Head of caudate nucleus (tissue), 42 donors: ENCODE measurements at regions of chr15 and their contacts with region 1.

Region 1: DNA sequence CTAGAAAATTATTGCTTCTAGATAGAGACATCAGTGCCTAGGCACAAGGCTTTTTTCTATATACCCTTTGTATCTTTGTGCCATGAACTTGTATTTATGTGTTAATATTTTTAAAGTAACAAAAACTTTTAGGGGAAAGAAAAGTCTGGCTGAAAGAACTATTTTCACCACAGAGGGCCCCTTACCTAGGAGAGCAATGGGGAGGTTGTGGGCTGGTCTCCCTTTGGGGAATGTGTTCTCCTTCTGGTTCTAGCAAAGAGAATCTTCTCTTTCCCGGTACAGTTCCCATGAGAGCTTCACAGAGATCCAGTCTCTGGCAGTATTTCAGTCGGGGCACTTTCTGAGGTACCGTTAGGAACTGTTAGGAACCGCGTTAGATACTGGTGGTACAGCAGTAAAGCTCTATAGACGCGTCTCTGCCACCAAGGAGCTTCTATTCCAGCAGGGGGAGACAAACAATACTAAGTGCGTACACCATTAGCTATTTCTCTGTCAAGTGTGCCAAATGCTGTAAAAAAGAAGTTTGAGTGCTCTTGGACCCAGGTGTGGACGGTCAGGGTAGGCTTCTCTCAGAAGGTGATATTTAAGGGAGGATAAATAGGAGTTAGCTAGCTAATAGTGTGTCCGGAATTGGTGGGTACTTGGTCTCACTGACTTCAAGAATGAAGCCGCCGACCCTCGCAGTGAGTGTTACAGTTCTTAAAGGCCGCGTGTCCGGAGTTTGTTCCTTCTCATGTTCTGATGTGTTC is 4.6 kb upstream of the EPB42 start:
- DNase-seq: peak in 33 of 42 donors; percentile 23 to 77 (median 49)

Region 2: GRCh38 chr15:43204016-43204901 is 21.1 kb before region 1 on chr15:
- intact Hi-C with region 1: no loop called
- DNase-seq: peak in 38 of 42 donors; percentile 13 to 67 (median 40)

Region 3: GRCh38 chr15:43277231-43277823 is 52.0 kb after region 1 on chr15:
- intact Hi-C with region 1: loop called (anchors 5 kb)
- DNase-seq: no peak